Activated CD4-positive, alpha-beta T cell treated with anti-CD3 and anti-CD28 coated beads, Interleukin-2, amount 10 ng/mL, durations not matched to agents 24 days and 14 days (primary cell): ENCODE measurements at regions of chr2 and their contacts with region 1.

Region 1: GRCh38 chr2:42859006-42859552 is 66.7 kb upstream of the HAAO start:
- DNase-seq: peak; percentile 91
- H3K4me3 Mint-ChIP-seq: no peak overlapping the region
- H3K27ac Mint-ChIP-seq: no peak overlapping the region
- H3K4me1 Mint-ChIP-seq: peaks cover 2% of the 10 kb centered on the region
- H3K27me3 Mint-ChIP-seq: no peaks in the 10 kb centered on the region

Region 2: GRCh38 chr2:42928692-42929545 is 69.8 kb after region 1 on chr2:
- intact Hi-C with region 1: loop called (anchors 10 kb)
- DNase-seq: no peak
- H3K4me3 Mint-ChIP-seq: no peak overlapping the region
- H3K27ac Mint-ChIP-seq: no peak overlapping the region
- H3K4me1 Mint-ChIP-seq: no peaks in the 10 kb centered on the region
- H3K27me3 Mint-ChIP-seq: no peaks in the 10 kb centered on the region